CD8-positive, alpha-beta T cell (primary cell): ENCODE measurements at regions of chr10 and their contacts with region 1.

Region 1: GRCh38 chr10:714214-714613 is 24.7 kb upstream of the DIP2C start:
- DNase-seq: no peak
- ATAC-seq: no peak
- H3K4me3 ChIP-seq: no peak overlapping the region
- H3K4me3 Mint-ChIP-seq: no peak overlapping the region
- H3K27ac ChIP-seq: no peak overlapping the region
- H3K27ac Mint-ChIP-seq: no peak overlapping the region
- H3K4me1 ChIP-seq: no peaks in the 10 kb centered on the region
- H3K4me1 Mint-ChIP-seq: no peaks in the 10 kb centered on the region
- H3K27me3 ChIP-seq: no peaks in the 10 kb centered on the region
- H3K27me3 Mint-ChIP-seq: peaks cover 10% of the 10 kb centered on the region
- CTCF ChIP-seq: no peak

Region 2: DNA sequence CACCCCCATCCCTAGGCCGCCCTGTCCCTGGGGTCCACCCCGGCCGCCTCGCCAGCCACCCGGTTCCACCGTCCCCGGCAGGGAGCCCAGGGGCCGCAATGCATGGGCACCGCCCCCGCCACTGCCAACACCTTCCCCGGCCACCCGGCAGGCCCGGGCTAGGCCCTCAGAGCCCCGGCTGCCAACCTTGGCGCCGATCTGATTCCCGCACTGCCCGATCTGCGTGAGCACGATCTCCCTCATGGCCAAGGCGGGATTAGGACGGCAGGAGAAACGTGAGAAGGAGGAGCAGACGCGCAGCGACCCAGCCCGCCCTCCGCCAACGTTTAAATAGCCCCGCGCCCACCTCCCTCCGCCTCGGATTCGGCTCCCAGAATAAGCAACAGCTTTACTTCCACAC is 665.2 kb before region 1 on chr10 and contains the start of gene TUBB8:
- CTCF ChIA-PET with region 1: no interaction called
- POLR2A ChIA-PET with region 1: no interaction called
- intact Hi-C with region 1: no loop called
- DNase-seq: no peak
- ATAC-seq: no peak
- H3K4me3 ChIP-seq: no peak within 1 kb of the TSS
- H3K4me3 Mint-ChIP-seq: no peak within 1 kb of the TSS
- H3K27ac ChIP-seq: no peak within 1 kb of the TSS
- H3K27ac Mint-ChIP-seq: no peak within 1 kb of the TSS
- H3K4me1 ChIP-seq: no peaks in the 10 kb centered on the region
- H3K4me1 Mint-ChIP-seq: no peaks in the 10 kb centered on the region
- H3K27me3 ChIP-seq: no peaks in the 10 kb centered on the region
- H3K27me3 Mint-ChIP-seq: no peaks in the 10 kb centered on the region
- CTCF ChIP-seq: no peak
- total RNA-seq, gene TUBB8: not detected

Region 3: DNA sequence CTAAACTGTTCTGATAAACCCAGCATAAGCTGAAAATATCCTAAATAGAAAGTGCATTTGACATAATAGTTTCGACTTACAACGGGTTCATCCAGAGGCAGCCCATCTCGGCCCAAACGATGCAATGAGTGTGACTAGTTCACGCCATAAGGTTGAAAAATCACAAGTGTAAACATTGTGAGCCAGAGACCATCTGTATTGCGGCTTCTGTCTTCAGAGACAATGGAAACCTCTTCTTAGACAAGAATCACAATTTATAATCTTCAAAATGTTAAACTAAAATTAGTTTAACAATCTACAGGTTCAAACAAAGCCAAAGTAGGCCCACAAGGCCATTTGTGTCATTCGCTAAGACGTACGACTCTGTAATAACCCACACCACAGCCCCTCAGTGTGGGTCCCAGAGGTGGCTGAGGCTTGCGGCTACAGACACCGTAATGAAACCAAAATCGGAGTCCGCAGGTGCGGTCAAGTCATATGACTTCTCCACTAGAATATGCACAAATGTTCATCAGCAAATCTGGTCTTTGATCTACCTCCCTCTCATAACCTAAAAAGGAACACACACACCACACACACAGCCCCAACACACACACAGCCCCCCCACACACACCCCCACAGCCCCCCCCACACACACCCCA is 106.5 kb before region 1 on chr10:
- CTCF ChIA-PET with region 1: no interaction called
- POLR2A ChIA-PET with region 1: no interaction called
- intact Hi-C with region 1: no loop called
- DNase-seq: no peak
- ATAC-seq: no peak
- H3K4me3 ChIP-seq: no peak overlapping the region
- H3K4me3 Mint-ChIP-seq: no peak overlapping the region
- H3K27ac ChIP-seq: no peak overlapping the region
- H3K27ac Mint-ChIP-seq: no peak overlapping the region
- H3K4me1 ChIP-seq: peaks cover 3% of the 10 kb centered on the region
- H3K4me1 Mint-ChIP-seq: peaks cover 3% of the 10 kb centered on the region
- H3K27me3 ChIP-seq: no peaks in the 10 kb centered on the region
- H3K27me3 Mint-ChIP-seq: peaks cover 10% of the 10 kb centered on the region
- CTCF ChIP-seq: no peak

Region 4: GRCh38 chr10:677038-677437 is 37.2 kb before region 1 on chr10:
- CTCF ChIA-PET with region 1: no interaction called
- POLR2A ChIA-PET with region 1: no interaction called
- intact Hi-C with region 1: no loop called
- DNase-seq: no peak
- ATAC-seq: no peak
- H3K4me3 ChIP-seq: no peak overlapping the region
- H3K4me3 Mint-ChIP-seq: no peak overlapping the region
- H3K27ac ChIP-seq: no peak overlapping the region
- H3K27ac Mint-ChIP-seq: no peak overlapping the region
- H3K4me1 ChIP-seq: no peaks in the 10 kb centered on the region
- H3K4me1 Mint-ChIP-seq: no peaks in the 10 kb centered on the region
- H3K27me3 ChIP-seq: no peaks in the 10 kb centered on the region
- H3K27me3 Mint-ChIP-seq: peaks cover under 1% of the 10 kb centered on the region
- CTCF ChIP-seq: no peak

Region 5: GRCh38 chr10:767211-767610 is 53.0 kb after region 1 on chr10:
- CTCF ChIA-PET with region 1: no interaction called
- POLR2A ChIA-PET with region 1: no interaction called
- intact Hi-C with region 1: loop called in 1 of 2 experiments (anchors 2 kb)
- DNase-seq: no peak
- ATAC-seq: no peak
- H3K4me3 ChIP-seq: no peak overlapping the region
- H3K4me3 Mint-ChIP-seq: no peak overlapping the region
- H3K27ac ChIP-seq: no peak overlapping the region
- H3K27ac Mint-ChIP-seq: no peak overlapping the region
- H3K4me1 ChIP-seq: no peaks in the 10 kb centered on the region
- H3K4me1 Mint-ChIP-seq: no peaks in the 10 kb centered on the region
- H3K27me3 ChIP-seq: no peaks in the 10 kb centered on the region
- H3K27me3 Mint-ChIP-seq: peaks cover 12% of the 10 kb centered on the region
- CTCF ChIP-seq: no peak